Activated CD8-positive, alpha-beta T cell treated with anti-CD3 and anti-CD28 coated beads for 36 hours (primary cell): ENCODE measurements at regions of chr15 and their contacts with region 1.

Region 1: DNA sequence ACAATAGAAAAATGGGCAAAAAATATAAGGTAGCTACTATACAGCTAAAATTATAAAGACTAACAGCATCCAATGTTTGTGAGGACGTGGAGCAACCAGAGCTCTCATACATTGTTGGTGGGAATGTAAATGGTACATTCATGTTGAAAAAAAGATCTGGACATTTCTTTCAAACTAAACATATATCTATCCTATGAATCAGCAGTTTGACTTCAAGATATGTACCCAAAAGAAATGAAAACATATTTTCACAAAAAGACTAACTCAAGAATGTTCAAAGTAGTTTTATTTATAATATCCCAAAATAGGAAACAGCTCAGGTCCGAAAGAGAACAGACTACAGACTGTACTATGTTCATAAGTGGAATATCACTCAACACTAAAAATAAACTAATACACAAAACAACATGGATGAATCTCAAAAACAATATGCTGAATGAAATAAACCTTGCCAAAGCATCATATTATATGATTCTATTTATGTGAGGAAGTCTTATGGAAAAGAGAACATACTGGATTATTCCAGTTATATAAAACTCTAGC is 8.8 kb upstream of the TTBK2 start:
- DNase-seq: no peak
- ATAC-seq: no peak
- H3K4me3 Mint-ChIP-seq: no peak overlapping the region
- H3K27ac Mint-ChIP-seq: no peak overlapping the region
- H3K4me1 Mint-ChIP-seq: no peaks in the 10 kb centered on the region
- H3K27me3 Mint-ChIP-seq: no peaks in the 10 kb centered on the region
- CTCF ChIP-seq: no peak

Region 2: DNA sequence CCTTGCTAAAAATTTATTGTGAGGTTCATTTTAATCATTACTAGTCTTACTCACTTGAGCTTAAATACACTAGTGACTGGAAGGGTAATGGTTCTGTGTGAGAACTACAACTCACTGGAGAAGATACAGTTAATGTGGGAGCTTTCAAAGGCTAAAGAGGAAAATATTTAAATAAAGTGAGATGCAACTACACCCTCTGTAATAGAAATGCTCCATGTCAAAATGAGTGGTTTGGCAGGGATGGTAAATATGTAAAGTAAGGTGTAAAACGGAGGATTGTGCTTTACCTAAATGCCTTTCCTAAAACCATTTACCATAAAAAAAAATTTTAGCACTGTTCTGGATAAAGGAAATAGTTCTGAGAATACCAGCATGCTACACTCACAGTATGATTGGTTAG is 396.1 kb before region 1 on chr15:
- CTCF ChIA-PET with region 1: no interaction called
- POLR2A ChIA-PET with region 1: no interaction called
- intact Hi-C with region 1: no loop called
- DNase-seq: no peak
- ATAC-seq: no peak
- H3K4me3 Mint-ChIP-seq: no peak overlapping the region
- H3K27ac Mint-ChIP-seq: no peak overlapping the region
- H3K4me1 Mint-ChIP-seq: no peaks in the 10 kb centered on the region
- H3K27me3 Mint-ChIP-seq: no peaks in the 10 kb centered on the region
- CTCF ChIP-seq: no peak

Region 3: GRCh38 chr15:42704492-42704926 is 224.9 kb before region 1 on chr15:
- CTCF ChIA-PET with region 1: interaction called, 32 read pairs
- POLR2A ChIA-PET with region 1: no interaction called
- intact Hi-C with region 1: loop called (anchors 5 kb)
- DNase-seq: peak; percentile 76
- ATAC-seq: peak; percentile 94
- H3K4me3 Mint-ChIP-seq: no peak overlapping the region
- H3K27ac Mint-ChIP-seq: no peak overlapping the region
- H3K4me1 Mint-ChIP-seq: peaks cover 5% of the 10 kb centered on the region
- H3K27me3 Mint-ChIP-seq: no peaks in the 10 kb centered on the region
- CTCF ChIP-seq: peak; percentile 79

Region 4: DNA sequence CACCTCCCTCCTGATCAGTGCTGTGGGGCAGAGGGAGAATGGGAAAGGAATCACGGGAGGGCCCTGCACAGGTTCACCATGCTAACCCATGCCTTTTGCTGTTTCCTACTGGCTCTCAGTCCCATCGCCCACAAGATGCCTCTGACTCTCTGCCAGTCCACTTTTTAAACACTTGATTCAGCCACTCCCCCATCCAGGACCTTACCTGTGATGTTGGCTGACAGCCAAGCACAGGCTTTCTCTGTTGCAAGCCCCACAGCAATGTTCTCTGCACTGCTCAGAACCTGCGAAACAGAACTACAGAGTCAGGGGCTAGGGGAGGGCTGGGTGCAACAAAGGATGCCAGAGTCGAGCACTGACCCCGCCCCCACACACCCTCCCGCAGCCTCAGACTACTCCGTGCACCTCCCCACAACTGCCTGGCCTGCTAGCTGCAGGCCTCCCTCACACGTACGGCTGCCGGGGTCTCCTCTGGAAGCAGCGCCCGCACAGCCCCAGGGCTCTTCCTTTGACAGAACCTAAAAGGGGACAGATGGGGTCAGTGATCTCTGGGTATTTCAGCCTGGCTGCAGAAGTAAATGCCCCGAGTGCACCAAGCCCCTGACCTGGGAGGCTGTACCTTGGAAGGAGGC is 201.5 kb before region 1 on chr15:
- CTCF ChIA-PET with region 1: interaction called, 5 read pairs
- POLR2A ChIA-PET with region 1: no interaction called
- intact Hi-C with region 1: loop called (anchors 5 kb)
- DNase-seq: no peak
- ATAC-seq: no peak
- H3K4me3 Mint-ChIP-seq: no peak overlapping the region
- H3K27ac Mint-ChIP-seq: no peak overlapping the region
- H3K4me1 Mint-ChIP-seq: no peaks in the 10 kb centered on the region
- H3K27me3 Mint-ChIP-seq: no peaks in the 10 kb centered on the region
- CTCF ChIP-seq: no peak